ENCODE measurements at regions of chr21 and their contacts with region 1.

Region 1: GRCh38 chr21:28856588-28857250 is 136.0 kb downstream of the LTN1 start:
- DNase-seq: no peak
- H3K4me3 ChIP-seq: no peak overlapping the region
- H3K4me3 Mint-ChIP-seq: no peak overlapping the region
- H3K27ac Mint-ChIP-seq: no peak overlapping the region
- H3K4me1 ChIP-seq: no peaks in the 10 kb centered on the region
- H3K4me1 Mint-ChIP-seq: no peaks in the 10 kb centered on the region
- H3K27me3 ChIP-seq: no peaks in the 10 kb centered on the region
- H3K27me3 Mint-ChIP-seq: peaks cover 2% of the 10 kb centered on the region
- CTCF ChIP-seq: no peak

Region 2: GRCh38 chr21:28633839-28634555 is 222.7 kb before region 1 on chr21:
- CTCF ChIA-PET with region 1: no interaction called
- POLR2A ChIA-PET with region 1: no interaction called
- intact Hi-C with region 1: no loop called
- DNase-seq: no peak
- H3K4me3 ChIP-seq: no peak overlapping the region
- H3K4me3 Mint-ChIP-seq: no peak overlapping the region
- H3K27ac Mint-ChIP-seq: no peak overlapping the region
- H3K4me1 ChIP-seq: no peaks in the 10 kb centered on the region
- H3K4me1 Mint-ChIP-seq: peaks cover 6% of the 10 kb centered on the region
- H3K27me3 ChIP-seq: no peaks in the 10 kb centered on the region
- H3K27me3 Mint-ChIP-seq: no peaks in the 10 kb centered on the region
- CTCF ChIP-seq: no peak

Region 3: DNA sequence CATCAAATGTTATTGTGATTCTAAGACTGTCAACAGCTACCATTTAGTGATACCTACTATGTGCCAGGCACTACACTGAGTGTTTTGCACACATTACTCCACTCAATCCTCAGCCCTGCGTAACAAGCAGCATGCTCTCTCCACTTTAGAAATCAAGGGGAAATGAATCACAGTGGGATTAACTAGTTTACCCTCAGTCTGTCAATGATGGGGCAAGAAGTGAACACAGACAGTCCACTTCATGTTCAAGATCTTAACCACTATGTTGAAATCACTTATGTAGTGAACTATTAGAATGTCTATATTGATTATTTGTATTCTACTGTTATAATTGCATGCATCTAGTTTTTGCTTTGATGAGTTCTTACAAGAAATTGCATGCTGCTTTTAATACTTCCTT is 29.3 kb before region 1 on chr21:
- CTCF ChIA-PET with region 1: no interaction called
- POLR2A ChIA-PET with region 1: no interaction called
- intact Hi-C with region 1: loop called (anchors 5 kb)
- DNase-seq: no peak
- H3K4me3 ChIP-seq: no peak overlapping the region
- H3K4me3 Mint-ChIP-seq: no peak overlapping the region
- H3K27ac Mint-ChIP-seq: no peak overlapping the region
- H3K4me1 ChIP-seq: no peaks in the 10 kb centered on the region
- H3K4me1 Mint-ChIP-seq: peaks cover 13% of the 10 kb centered on the region
- H3K27me3 ChIP-seq: peaks cover 1% of the 10 kb centered on the region; the same call in 1 of the 2 replicates
- H3K27me3 Mint-ChIP-seq: no peaks in the 10 kb centered on the region
- CTCF ChIP-seq: no peak

Measured in Caco-2 (cell line).